ENCODE measurements at regions of chr2 and their contacts with region 1.

Region 1: DNA sequence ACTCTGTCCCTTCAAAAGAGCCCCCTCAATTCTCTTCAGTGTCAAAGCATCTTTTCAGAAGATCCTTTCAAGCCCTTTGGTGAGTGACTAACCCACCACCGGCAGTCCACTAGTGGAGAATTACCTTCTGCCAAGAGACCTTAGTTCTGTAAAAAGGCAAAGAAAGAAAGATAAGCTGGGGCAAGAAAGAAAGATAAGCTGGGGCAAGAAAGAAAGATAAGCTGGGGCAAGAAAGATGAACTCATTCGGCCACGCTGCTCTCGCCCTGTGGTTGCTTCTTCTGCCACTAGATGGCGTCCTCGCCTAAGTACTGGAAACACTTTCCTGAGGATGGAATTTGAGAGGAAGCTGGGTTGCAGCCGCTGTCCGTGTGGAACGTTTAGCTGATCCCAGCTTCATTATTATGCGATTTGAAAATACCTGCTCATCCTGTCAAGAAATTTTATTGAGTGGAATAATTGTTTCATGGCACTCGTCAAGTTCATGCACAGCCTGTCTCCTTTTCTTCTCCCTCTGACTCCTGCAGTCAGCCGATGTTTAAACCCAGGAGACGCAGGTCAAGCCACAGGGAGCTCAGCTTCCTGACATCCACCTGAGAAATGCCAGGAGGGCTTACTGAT is 17.3 kb upstream of the ANXA4 start:
- DNase-seq: peak; percentile 87
- H3K4me3 Mint-ChIP-seq: peak overlapping the region; percentile 41
- H3K27ac Mint-ChIP-seq: no peak overlapping the region
- H3K4me1 Mint-ChIP-seq: peaks cover 6% of the 10 kb centered on the region
- H3K27me3 Mint-ChIP-seq: no peaks in the 10 kb centered on the region

Region 2: GRCh38 chr2:69565431-69565839 is 159.2 kb before region 1 on chr2:
- CTCF ChIA-PET with region 1: interaction called, 19 read pairs
- POLR2A ChIA-PET with region 1: no interaction called
- DNase-seq: peak; percentile 70
- H3K4me3 Mint-ChIP-seq: no peak overlapping the region
- H3K27ac Mint-ChIP-seq: peak overlapping the region; percentile 37
- H3K4me1 Mint-ChIP-seq: peaks cover 42% of the 10 kb centered on the region
- H3K27me3 Mint-ChIP-seq: no peaks in the 10 kb centered on the region

Region 3: DNA sequence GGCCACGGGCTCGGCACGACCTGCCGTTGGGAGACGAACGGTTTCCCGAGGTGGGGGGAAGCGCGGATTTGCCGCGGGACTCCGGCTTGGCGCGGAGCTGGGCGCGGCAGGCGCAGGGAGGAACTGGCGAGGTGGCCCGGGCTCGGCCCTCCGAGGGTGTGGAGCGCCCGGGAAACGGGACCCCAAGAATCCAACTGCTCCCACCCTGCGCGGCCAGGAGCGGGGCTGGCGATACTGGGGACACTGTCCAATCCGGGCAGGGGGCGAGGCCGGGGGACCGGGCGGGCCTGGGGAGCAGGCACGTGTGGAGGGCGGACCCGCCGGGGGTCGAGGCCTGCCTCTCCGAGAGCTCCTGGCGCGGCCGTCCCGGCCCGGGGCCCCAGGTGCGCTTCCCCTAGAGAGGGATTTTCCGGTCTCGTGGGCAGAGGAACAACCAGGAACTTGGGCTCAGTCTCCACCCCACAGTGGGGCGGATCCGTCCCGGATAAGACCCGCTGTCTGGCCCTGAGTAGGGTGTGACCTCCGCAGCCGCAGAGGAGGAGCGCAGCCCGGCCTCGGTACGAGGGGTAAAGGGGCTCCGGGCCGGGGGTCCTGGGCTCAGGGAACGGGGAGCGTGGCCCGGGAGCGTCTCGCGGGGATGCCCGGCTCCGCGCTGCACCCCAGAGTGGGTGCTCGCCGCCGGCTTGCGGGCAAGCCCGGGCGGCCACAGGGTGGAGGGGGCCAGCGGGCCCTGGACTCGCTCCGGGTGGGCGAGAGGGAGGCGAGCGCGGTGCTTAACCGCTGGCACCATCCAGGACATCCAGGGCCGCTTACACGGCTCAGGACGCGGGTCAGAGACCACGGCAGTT is 17.2 kb after region 1 on chr2 and contains the start of gene ANXA4:
- CTCF ChIA-PET with region 1: interaction called, 71 read pairs
- POLR2A ChIA-PET with region 1: interaction called, 5 read pairs
- DNase-seq: peak; percentile 66
- H3K4me3 Mint-ChIP-seq: peak within 1 kb of the TSS; percentile 84
- H3K27ac Mint-ChIP-seq: peak within 1 kb of the TSS; percentile 88
- H3K4me1 Mint-ChIP-seq: peaks cover 33% of the 10 kb centered on the region
- H3K27me3 Mint-ChIP-seq: peaks cover 8% of the 10 kb centered on the region
- total RNA-seq, gene ANXA4: 86.9 to 90.4 TPM

Region 4: GRCh38 chr2:69789175-69789721 is 64.6 kb after region 1 on chr2:
- CTCF ChIA-PET with region 1: interaction called, 12 read pairs
- POLR2A ChIA-PET with region 1: no interaction called
- DNase-seq: no peak
- H3K4me3 Mint-ChIP-seq: no peak overlapping the region
- H3K27ac Mint-ChIP-seq: no peak overlapping the region
- H3K4me1 Mint-ChIP-seq: peaks cover 12% of the 10 kb centered on the region
- H3K27me3 Mint-ChIP-seq: no peaks in the 10 kb centered on the region

Region 5: DNA sequence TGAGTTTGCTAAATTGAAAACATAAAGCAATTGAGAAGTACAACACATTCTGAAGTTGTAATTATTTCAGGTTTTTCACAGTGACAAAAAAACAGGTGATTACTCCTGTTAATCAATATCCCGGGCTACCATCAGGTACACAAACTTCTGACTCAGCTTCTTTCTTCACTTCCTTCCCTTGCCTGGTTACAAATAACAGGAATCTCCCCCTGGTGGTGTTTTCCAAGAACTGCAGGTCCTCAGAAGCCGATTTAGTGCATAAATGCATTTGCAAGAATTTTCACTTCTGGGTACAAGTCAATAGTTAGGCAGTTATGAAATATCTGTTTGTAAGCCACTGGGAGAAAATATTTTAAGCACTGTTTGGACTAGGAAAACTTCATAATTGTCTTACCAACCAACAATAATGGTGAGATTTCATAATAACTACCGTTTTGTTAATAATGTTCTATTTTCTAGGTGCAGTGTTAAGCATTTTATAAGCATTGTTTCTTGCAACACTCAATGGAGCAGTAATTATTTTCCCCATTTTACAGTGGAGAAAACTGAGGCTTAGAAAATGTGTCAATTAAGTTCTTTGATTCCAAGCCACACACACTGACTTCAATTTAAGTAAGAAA is 92.4 kb after region 1 on chr2:
- CTCF ChIA-PET with region 1: interaction called, 323 read pairs
- POLR2A ChIA-PET with region 1: interaction called, 24 read pairs
- DNase-seq: peak; percentile 80
- H3K4me3 Mint-ChIP-seq: no peak overlapping the region
- H3K27ac Mint-ChIP-seq: no peak overlapping the region
- H3K4me1 Mint-ChIP-seq: peaks cover 9% of the 10 kb centered on the region
- H3K27me3 Mint-ChIP-seq: no peaks in the 10 kb centered on the region

Region 6: GRCh38 chr2:69848201-69848770 is 123.6 kb after region 1 on chr2:
- CTCF ChIA-PET with region 1: interaction called, 11 read pairs
- POLR2A ChIA-PET with region 1: no interaction called
- DNase-seq: no peak
- H3K4me3 Mint-ChIP-seq: no peak overlapping the region
- H3K27ac Mint-ChIP-seq: no peak overlapping the region
- H3K4me1 Mint-ChIP-seq: peaks cover 3% of the 10 kb centered on the region
- H3K27me3 Mint-ChIP-seq: no peaks in the 10 kb centered on the region

Region 7: GRCh38 chr2:69902213-69902922 is 177.7 kb after region 1 on chr2:
- CTCF ChIA-PET with region 1: interaction called, 15 read pairs
- POLR2A ChIA-PET with region 1: no interaction called
- DNase-seq: peak; percentile 27
- H3K4me3 Mint-ChIP-seq: peak overlapping the region; percentile 79
- H3K27ac Mint-ChIP-seq: peak overlapping the region; percentile 91
- H3K4me1 Mint-ChIP-seq: peaks cover 56% of the 10 kb centered on the region
- H3K27me3 Mint-ChIP-seq: no peaks in the 10 kb centered on the region